ENCODE measurements at regions of chr6 and their contacts with region 1.

Region 1: GRCh38 chr6:43575772-43576551 is at the starts of genes POLH and XPO5:
- DNase-seq: peak; percentile 94
- H3K4me3 ChIP-seq: peak within 1 kb of the TSS; percentile 99
- H3K27ac ChIP-seq: peak within 1 kb of the TSS; percentile 92
- H3K4me1 ChIP-seq: peaks cover 23% of the 10 kb centered on the region
- CTCF ChIP-seq: 0 out of 2 replicates have a peak, but pooled peaks have one; percentile 27
- total RNA-seq, gene POLH: 64.3 and 67.3 TPM in 2 replicates
- total RNA-seq, gene XPO5: 54.6 and 58.5 TPM in 2 replicates

Region 2: DNA sequence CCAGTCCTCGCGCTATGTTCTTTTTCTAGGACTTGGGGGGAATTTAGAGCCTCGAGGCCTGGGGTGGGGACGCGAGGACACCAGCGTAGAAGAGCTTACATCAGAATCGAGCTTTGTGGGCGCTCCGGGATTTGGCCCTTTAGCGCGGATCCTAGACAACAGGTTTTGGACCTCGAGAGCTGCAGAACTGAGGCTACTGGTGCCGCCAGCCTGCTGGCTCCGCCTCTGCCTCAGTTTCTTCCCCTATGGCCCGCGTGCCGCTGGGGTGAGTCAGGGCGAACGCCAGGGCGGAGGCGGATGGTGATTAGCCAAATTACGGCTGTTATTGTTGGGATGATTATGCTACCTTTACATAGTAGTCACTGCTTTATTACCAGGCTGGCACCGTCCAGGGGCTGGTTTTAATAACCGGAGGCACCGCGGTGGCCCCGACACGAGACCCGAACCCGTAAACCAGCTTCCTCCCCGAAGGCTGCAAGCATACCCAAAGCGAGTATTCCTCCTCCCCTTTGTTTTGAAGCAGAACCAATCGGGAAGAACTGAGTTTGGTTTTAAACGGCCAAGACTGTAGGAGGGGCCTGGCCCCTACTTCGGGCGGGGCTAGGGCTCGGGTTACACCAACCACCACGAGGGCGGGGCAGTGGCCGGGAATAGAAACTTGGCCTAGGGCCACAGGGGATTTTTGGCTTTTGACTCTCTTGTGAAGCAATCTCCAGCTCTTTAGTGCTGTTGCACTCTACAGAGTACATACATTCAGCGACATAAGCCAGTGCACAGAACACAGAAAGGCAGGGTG is 53.7 kb after region 1 on chr6:
- CTCF ChIA-PET with region 1: no interaction called
- POLR2A ChIA-PET with region 1: interaction called, 3 read pairs
- intact Hi-C with region 1: loop called (anchors 1 kb)
- DNase-seq: peak; percentile 99
- H3K4me3 ChIP-seq: peak overlapping the region; percentile 75
- H3K27ac ChIP-seq: peak overlapping the region; percentile 95
- H3K4me1 ChIP-seq: peaks cover 50% of the 10 kb centered on the region
- CTCF ChIP-seq: no peak

Region 3: GRCh38 chr6:43779852-43780236 is 203.9 kb after region 1 on chr6:
- CTCF ChIA-PET with region 1: no interaction called
- POLR2A ChIA-PET with region 1: no interaction called
- intact Hi-C with region 1: no loop called
- DNase-seq: no peak
- H3K4me3 ChIP-seq: no peak overlapping the region
- H3K27ac ChIP-seq: no peak overlapping the region
- H3K4me1 ChIP-seq: peaks cover 15% of the 10 kb centered on the region
- CTCF ChIP-seq: no peak